ENCODE measurements at regions of chr5 and their contacts with region 1.

Region 1: DNA sequence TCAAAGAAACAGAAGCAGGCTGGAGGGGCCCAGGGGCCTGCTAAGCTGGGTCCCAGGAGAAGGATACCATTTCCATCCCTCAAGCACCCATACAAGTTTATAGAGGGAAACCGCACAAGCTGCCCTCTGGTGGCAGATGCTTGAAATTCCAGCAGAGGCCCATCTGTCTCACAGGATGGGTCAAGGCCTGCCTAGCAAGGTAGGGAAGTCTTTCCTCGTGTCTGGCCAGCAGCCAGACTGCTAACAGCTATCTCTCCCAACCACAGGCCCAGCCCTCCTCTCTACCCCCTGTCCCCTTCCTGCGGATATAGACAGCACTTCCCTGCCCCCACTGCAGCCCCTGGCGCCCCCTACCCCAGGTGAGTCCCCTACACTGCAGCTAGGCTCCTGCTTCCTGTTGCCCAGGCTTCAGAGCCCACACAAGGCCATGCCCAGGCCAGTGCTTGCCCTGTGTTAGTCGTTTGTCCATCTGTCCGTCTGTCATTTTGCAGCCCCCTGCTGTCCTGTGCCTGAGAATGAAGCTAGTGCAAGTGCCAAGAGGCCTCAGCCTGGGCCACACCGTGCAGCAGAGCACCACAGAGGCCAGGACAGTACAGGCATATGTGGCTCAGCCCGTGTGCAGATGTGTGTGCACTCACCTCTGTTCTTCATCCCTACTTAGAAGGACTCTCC is 26.2 kb downstream of the TCF7 start:
- DNase-seq: peak in 13 of 14 experiments; percentile 43 to 81 (median 54)
- ATAC-seq: peak; percentile 49
- H3K4me3 ChIP-seq: no peak overlapping the region
- H3K4me3 Mint-ChIP-seq: peak overlapping the region; percentile 36
- H3K27ac ChIP-seq: peak overlapping the region; percentile 57 to 96
- H3K27ac Mint-ChIP-seq: peak overlapping the region; percentile 98
- H3K4me1 ChIP-seq: peaks cover 79% of the 10 kb centered on the region
- H3K4me1 Mint-ChIP-seq: peaks cover 80% of the 10 kb centered on the region
- H3K27me3 ChIP-seq: no peaks in the 10 kb centered on the region
- H3K27me3 Mint-ChIP-seq: no peaks in the 10 kb centered on the region
- CTCF ChIP-seq: peak; percentile 72

Region 2: GRCh38 chr5:134063188-134063820 is 77.4 kb before region 1 on chr5:
- CTCF ChIA-PET with region 1: interaction called, 10 read pairs
- POLR2A ChIA-PET with region 1: no interaction called
- intact Hi-C with region 1: no loop called
- DNase-seq: no peak
- ATAC-seq: no peak
- H3K4me3 ChIP-seq: no peak overlapping the region
- H3K4me3 Mint-ChIP-seq: no peak overlapping the region
- H3K27ac ChIP-seq: no peak overlapping the region
- H3K27ac Mint-ChIP-seq: no peak overlapping the region
- H3K4me1 ChIP-seq: peaks cover 14% of the 10 kb centered on the region
- H3K4me1 Mint-ChIP-seq: peaks cover 24% of the 10 kb centered on the region
- H3K27me3 ChIP-seq: no peaks in the 10 kb centered on the region
- H3K27me3 Mint-ChIP-seq: no peaks in the 10 kb centered on the region
- CTCF ChIP-seq: no peak

Region 3: DNA sequence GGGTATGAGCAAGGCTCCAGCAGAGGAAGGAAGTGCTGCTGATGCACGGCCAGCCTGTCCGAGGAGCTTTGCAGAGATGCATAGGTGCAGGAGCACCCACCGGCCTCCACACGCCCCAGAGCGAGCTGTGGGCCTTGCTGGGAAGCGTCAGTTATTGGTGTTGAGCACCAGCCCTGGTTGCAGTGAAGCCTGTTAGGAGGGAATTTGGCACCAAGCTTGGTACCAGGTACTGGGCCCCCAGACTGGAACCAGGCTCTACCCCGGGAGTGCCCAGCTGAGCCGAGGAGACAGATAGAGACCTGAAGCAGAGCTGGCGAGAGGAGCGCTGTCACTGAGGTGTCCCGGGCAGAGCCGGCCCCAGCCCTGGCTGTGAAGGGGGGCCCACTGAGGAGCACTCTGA is 20.9 kb before region 1 on chr5:
- CTCF ChIA-PET with region 1: interaction called, 23 read pairs
- POLR2A ChIA-PET with region 1: no interaction called
- intact Hi-C with region 1: no loop called
- DNase-seq: peak in 1 of 14 experiments; percentile 58
- ATAC-seq: no peak
- H3K4me3 ChIP-seq: peak overlapping the region; percentile 92
- H3K4me3 Mint-ChIP-seq: peak overlapping the region; percentile 95
- H3K27ac ChIP-seq: peak overlapping the region; percentile 49 to 96
- H3K27ac Mint-ChIP-seq: peak overlapping the region; percentile 98
- H3K4me1 ChIP-seq: peaks cover 76% of the 10 kb centered on the region
- H3K4me1 Mint-ChIP-seq: peaks cover 66% of the 10 kb centered on the region
- H3K27me3 ChIP-seq: no peaks in the 10 kb centered on the region
- H3K27me3 Mint-ChIP-seq: no peaks in the 10 kb centered on the region
- CTCF ChIP-seq: no peak

Region 4: DNA sequence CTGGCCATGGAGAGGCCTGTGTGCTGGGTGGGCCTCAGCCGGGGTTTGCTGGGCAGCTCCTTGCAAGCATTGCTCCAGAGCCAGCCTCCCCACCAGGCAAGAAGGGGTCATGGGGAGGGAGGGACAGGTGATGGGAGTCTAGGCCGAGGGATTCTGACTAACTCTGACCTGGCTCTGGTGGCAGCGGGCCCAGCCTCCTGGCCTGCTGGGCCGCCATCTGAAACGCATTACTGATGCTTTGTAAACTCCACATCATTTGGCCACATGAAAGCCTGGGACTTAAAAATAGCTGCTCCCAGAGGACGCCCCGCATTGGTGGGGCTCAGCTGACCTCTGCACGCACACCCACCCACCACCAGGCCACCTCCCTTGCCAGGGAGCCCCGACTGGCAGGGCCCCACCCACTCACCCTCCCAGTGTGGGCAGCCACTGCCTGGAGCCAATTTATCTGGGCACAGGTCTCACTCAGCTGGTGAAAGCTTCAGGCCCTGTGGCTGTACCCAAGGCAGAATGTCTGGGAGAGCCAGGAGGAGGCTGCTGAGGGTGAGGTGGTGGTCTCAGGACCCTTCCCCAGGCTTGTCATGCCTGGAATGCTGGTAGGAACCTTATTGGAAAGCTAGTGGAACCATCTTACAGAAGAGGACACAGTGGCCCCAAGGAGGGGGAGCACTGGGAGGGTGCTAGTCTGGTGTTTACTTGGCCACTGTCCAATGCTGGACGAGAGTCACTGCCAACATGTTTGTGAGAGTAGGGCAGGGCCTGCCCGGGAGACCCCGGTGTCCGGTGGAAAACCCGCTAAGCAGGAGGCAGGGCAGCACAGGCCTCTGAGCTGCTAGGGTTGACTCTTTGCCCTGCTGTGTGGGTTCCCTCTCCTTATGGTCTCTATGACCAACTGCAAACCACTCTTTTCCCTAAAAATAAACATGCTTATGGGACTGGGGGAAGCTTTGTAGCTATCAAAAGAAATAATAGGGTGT is 15.3 kb before region 1 on chr5:
- CTCF ChIA-PET with region 1: interaction called, 23 read pairs
- POLR2A ChIA-PET with region 1: no interaction called
- intact Hi-C with region 1: no loop called
- DNase-seq: peak in 1 of 14 experiments; percentile 57
- ATAC-seq: no peak
- H3K4me3 ChIP-seq: peak overlapping the region; percentile 92
- H3K4me3 Mint-ChIP-seq: peak overlapping the region; percentile 95
- H3K27ac ChIP-seq: peak overlapping the region; percentile 75 to 96
- H3K27ac Mint-ChIP-seq: peak overlapping the region; percentile 98
- H3K4me1 ChIP-seq: peaks cover 100% of the 10 kb centered on the region
- H3K4me1 Mint-ChIP-seq: peaks cover 98% of the 10 kb centered on the region
- H3K27me3 ChIP-seq: no peaks in the 10 kb centered on the region
- H3K27me3 Mint-ChIP-seq: no peaks in the 10 kb centered on the region
- CTCF ChIP-seq: no peak

Region 5: GRCh38 chr5:134153657-134154056 is 13.0 kb after region 1 on chr5:
- CTCF ChIA-PET with region 1: interaction called, 14 read pairs
- POLR2A ChIA-PET with region 1: interaction called, 184 read pairs
- intact Hi-C with region 1: no loop called
- DNase-seq: no peak
- ATAC-seq: no peak
- H3K4me3 ChIP-seq: no peak overlapping the region
- H3K4me3 Mint-ChIP-seq: no peak overlapping the region
- H3K27ac ChIP-seq: no peak overlapping the region
- H3K27ac Mint-ChIP-seq: peak overlapping the region; percentile 89
- H3K4me1 ChIP-seq: peaks cover 37% of the 10 kb centered on the region
- H3K4me1 Mint-ChIP-seq: peaks cover 92% of the 10 kb centered on the region
- H3K27me3 ChIP-seq: no peaks in the 10 kb centered on the region
- H3K27me3 Mint-ChIP-seq: no peaks in the 10 kb centered on the region
- CTCF ChIP-seq: no peak

Region 6: DNA sequence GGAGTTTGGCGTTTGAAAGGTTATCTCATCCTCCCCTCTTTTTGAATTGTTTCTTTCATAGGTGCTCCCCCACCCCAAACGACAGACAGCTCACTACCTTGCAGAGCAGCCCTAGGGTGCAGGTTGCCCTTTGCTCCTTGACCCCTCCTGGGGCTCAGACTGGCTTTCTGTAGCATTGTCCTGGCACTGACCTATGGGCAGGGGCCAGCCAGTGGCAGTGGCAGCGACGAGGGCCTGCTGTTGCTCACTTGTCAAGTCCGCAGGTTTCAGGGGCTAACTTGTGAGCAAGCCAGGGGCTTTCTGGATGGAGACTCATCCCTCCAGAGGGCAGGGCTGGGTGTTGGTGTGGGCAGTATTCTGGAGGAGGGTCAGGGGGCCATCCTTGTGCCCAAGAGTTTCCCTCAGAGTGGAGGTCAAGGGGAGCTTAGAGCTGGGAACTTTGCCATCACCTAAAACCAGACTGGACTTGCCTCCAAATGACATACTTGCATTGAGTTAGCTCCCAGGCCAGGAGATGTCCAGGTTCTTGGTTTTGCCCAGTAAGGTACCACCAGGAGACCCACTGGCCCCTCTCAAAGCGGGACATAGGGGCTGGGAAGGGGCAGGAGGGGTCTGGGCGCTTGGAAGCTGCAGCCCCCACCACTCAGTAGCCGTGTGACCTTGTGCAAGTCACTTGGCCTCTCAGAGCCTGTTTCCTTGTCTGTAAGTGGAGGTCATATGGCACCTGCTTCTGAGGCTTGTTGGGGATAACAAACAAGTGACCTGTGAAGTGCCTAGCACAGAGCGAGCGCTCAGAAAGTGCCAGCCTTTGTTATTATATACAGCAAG is 324.5 kb after region 1 on chr5:
- CTCF ChIA-PET with region 1: no interaction called
- POLR2A ChIA-PET with region 1: no interaction called
- intact Hi-C with region 1: no loop called
- DNase-seq: peak in 1 of 14 experiments; percentile 25
- ATAC-seq: no peak
- H3K4me3 ChIP-seq: peak overlapping the region; percentile 74
- H3K4me3 Mint-ChIP-seq: peak overlapping the region; percentile 56
- H3K27ac ChIP-seq: no peak overlapping the region
- H3K27ac Mint-ChIP-seq: peak overlapping the region; percentile 44
- H3K4me1 ChIP-seq: peaks cover 23% of the 10 kb centered on the region
- H3K4me1 Mint-ChIP-seq: peaks cover 18% of the 10 kb centered on the region
- H3K27me3 ChIP-seq: no peaks in the 10 kb centered on the region
- H3K27me3 Mint-ChIP-seq: no peaks in the 10 kb centered on the region
- CTCF ChIP-seq: no peak